BJ (cell line): ENCODE measurements at regions of chr19 and their contacts with region 1.

Region 1: GRCh38 chr19:10543420-10544241 is at the start of gene ATG4D:
- DNase-seq: no peak
- H3K4me3 ChIP-seq: peak within 1 kb of the TSS; percentile 89
- H3K27me3 ChIP-seq: no peaks in the 10 kb centered on the region
- CTCF ChIP-seq: no peak
- polyA plus RNA-seq, gene ATG4D: 6.8 and 13.0 TPM in 2 replicates

Region 2: GRCh38 chr19:10521461-10522171 is 22.0 kb before region 1 on chr19:
- CTCF ChIA-PET with region 1: interaction called, 11 read pairs
- POLR2A ChIA-PET with region 1: no interaction called
- DNase-seq: no peak
- H3K4me3 ChIP-seq: no peak overlapping the region
- H3K27me3 ChIP-seq: peaks cover 11% of the 10 kb centered on the region
- CTCF ChIP-seq: no peak

Region 3: GRCh38 chr19:10565567-10566407 is 22.2 kb after region 1 on chr19 and contains the start of gene KRI1:
- CTCF ChIA-PET with region 1: interaction called, 21 read pairs
- POLR2A ChIA-PET with region 1: no interaction called
- DNase-seq: peak; percentile 84
- H3K4me3 ChIP-seq: peak within 1 kb of the TSS; percentile 99
- H3K27me3 ChIP-seq: no peaks in the 10 kb centered on the region
- CTCF ChIP-seq: peak; percentile 27
- polyA plus RNA-seq, gene KRI1: 8.4 and 10.0 TPM in 2 replicates

Region 4: DNA sequence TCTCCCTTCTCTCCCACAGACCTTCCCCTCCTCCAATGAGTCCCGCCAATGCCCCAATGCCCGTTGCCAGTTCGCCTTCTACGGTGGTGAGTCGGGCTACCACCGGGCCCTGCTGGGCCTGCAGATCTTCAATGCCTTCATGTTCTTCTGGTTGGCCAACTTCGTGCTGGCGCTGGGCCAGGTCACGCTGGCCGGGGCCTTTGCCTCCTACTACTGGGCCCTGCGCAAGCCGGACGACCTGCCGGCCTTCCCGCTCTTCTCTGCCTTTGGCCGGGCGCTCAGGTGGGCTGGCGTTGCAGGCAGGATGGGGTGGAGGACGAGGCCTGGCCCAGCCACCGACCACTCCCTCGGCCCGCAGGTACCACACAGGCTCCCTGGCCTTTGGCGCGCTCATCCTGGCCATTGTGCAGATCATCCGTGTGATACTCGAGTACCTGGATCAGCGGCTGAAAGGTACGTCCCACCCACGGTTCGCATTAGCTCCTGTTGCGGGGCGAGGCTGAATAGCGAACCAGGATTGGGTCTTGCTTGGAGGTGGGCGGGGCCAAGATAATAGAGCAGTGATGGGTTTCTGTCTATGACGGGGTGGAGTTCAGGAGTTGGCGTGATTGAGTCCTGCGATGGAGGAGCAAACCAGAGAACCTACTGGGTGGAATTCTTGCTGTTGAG is 92.8 kb after region 1 on chr19:
- CTCF ChIA-PET with region 1: no interaction called
- POLR2A ChIA-PET with region 1: no interaction called
- DNase-seq: no peak
- H3K4me3 ChIP-seq: no peak overlapping the region
- H3K27me3 ChIP-seq: no peaks in the 10 kb centered on the region
- CTCF ChIP-seq: no peak